Activated B cell treated with CpG ODN at 0.5 μM for 24 hours (primary cell): ENCODE measurements at regions of chr4 and their contacts with region 1.

Region 1: GRCh38 chr4:15649914-15650545 is 5.1 kb downstream of the FBXL5 start:
- DNase-seq: no peak
- ATAC-seq: peak; percentile 63
- H3K4me3 Mint-ChIP-seq: no peak overlapping the region
- H3K27ac Mint-ChIP-seq: peak overlapping the region; percentile 31
- H3K4me1 Mint-ChIP-seq: peaks cover 53% of the 10 kb centered on the region
- H3K27me3 Mint-ChIP-seq: no peaks in the 10 kb centered on the region
- CTCF ChIP-seq: no peak

Region 2: DNA sequence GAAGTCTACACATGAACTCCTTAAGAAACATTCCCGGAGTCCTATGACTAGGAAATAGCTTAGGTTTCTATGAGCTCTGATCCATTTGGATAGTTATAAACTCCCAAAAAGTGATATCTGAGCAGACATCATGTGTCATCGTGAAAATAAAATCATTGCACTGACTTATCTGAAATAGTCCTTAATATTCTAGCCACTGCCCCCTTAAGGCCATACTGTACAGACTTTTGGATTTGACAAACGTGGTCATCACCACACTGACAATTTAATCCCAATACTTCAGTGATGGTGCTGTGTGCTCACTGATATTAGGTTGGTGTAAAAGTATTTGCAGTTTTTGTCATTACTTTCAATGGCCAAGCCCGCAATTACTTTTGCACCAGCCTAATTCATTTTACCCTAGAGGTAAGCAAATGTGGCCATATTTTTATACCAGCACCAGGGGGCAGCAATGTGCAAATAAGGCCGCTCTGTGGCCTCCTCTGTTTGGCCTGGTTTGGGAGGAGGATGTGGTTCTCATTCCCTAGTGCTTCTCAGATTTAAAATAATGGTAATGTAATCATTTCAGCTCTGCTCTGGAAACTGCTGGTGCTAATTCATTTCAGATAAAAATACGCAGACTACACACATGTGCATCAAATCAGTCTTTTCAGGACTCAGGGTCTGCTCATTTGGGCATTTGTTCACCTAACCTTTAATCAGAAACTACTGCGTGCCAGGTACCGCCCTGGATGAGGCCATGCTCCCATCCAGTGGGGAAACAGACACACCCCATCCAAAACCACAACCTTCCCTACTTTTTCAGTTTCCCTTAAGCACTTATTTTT is 418.6 kb before region 1 on chr4:
- CTCF ChIA-PET with region 1: interaction called, 4 read pairs
- POLR2A ChIA-PET with region 1: no interaction called
- intact Hi-C with region 1: loop called (anchors 1 kb)
- DNase-seq: peak; percentile 24
- ATAC-seq: peak; percentile 79
- H3K4me3 Mint-ChIP-seq: no peak overlapping the region
- H3K27ac Mint-ChIP-seq: no peak overlapping the region
- H3K4me1 Mint-ChIP-seq: peaks cover 21% of the 10 kb centered on the region
- H3K27me3 Mint-ChIP-seq: peaks cover 2% of the 10 kb centered on the region
- CTCF ChIP-seq: peak; percentile 70

Region 3: DNA sequence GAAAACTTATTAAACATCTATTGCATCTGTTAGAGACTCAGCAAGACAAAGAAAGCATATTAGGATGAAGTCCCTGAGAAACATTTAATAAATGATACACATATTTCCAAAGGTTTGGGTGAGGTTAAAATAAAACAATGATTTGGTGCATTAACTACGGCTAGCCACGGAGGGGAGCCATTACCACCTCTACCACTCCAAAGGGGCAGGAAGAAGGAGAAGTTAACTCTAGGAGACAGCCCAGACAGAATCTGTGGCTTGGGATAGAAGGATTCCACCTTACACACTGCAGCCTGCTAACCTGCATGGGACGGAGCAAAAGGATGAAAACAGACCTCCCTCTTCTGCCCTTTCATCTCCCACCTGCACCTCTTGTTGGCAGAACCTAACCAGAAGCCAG is 411.3 kb before region 1 on chr4:
- CTCF ChIA-PET with region 1: interaction called, 3 read pairs
- POLR2A ChIA-PET with region 1: no interaction called
- intact Hi-C with region 1: loop called (anchors 2 kb)
- DNase-seq: no peak
- ATAC-seq: peak; percentile 58
- H3K4me3 Mint-ChIP-seq: no peak overlapping the region
- H3K27ac Mint-ChIP-seq: no peak overlapping the region
- H3K4me1 Mint-ChIP-seq: peaks cover 8% of the 10 kb centered on the region
- H3K27me3 Mint-ChIP-seq: peaks cover 2% of the 10 kb centered on the region
- CTCF ChIP-seq: no peak

Region 4: GRCh38 chr4:15410750-15411149 is 239.3 kb before region 1 on chr4:
- CTCF ChIA-PET with region 1: no interaction called
- POLR2A ChIA-PET with region 1: no interaction called
- intact Hi-C with region 1: loop called (anchors 5 kb)
- DNase-seq: no peak
- ATAC-seq: peak; percentile 68
- H3K4me3 Mint-ChIP-seq: peak overlapping the region; percentile 73
- H3K27ac Mint-ChIP-seq: peak overlapping the region; percentile 79
- H3K4me1 Mint-ChIP-seq: peaks cover 67% of the 10 kb centered on the region
- H3K27me3 Mint-ChIP-seq: no peaks in the 10 kb centered on the region
- CTCF ChIP-seq: no peak

Region 5: DNA sequence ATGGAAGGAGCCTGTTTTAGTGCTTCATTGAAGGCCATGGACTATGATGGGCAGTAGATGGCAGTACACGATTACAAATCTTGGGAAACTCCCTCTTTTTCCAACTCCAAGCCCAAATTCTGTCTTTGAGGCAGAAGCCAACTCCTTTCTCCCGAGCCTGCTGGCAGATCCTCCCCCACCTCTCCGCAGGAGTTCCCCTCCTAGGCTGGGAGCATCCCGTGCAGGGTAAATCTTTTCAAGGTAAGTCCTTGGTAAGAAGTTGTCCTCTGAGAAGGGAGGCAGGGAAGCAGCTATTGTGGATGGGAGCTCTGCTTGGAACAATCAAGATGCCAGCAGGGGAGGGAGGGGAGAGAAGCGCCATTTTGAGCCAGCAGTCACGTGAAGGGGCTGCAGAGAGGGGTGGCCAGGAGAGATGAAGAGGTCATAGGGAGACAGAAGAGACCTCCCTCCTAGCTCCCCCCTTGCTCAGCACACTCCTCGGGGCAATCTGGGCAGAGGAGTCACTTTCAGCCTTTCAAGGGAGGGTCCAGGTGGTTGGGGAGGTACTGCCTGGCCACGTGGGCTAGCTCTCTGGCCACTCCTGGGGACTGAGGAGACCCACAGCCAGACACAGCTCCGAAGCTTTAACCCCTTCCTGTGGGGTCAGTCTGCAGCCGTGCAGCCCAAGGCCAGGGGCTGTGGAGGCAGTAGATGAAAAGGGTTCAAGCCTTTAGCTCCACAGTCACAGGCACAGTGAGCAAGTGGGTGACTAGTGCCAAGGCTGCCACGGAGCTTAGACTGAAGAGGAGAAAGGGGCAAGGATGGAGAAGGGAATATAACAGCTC is 170.7 kb before region 1 on chr4:
- CTCF ChIA-PET with region 1: no interaction called
- POLR2A ChIA-PET with region 1: no interaction called
- intact Hi-C with region 1: loop called (anchors 1 kb)
- DNase-seq: no peak
- ATAC-seq: no peak
- H3K4me3 Mint-ChIP-seq: no peak overlapping the region
- H3K27ac Mint-ChIP-seq: no peak overlapping the region
- H3K4me1 Mint-ChIP-seq: no peaks in the 10 kb centered on the region
- H3K27me3 Mint-ChIP-seq: no peaks in the 10 kb centered on the region
- CTCF ChIP-seq: no peak

Region 6: GRCh38 chr4:15765910-15766697 is 116.1 kb after region 1 on chr4:
- CTCF ChIA-PET with region 1: no interaction called
- POLR2A ChIA-PET with region 1: no interaction called
- intact Hi-C with region 1: no loop called
- DNase-seq: no peak
- ATAC-seq: no peak
- H3K4me3 Mint-ChIP-seq: no peak overlapping the region
- H3K27ac Mint-ChIP-seq: no peak overlapping the region
- H3K4me1 Mint-ChIP-seq: peaks cover 17% of the 10 kb centered on the region
- H3K27me3 Mint-ChIP-seq: no peaks in the 10 kb centered on the region
- CTCF ChIP-seq: no peak

Region 7: DNA sequence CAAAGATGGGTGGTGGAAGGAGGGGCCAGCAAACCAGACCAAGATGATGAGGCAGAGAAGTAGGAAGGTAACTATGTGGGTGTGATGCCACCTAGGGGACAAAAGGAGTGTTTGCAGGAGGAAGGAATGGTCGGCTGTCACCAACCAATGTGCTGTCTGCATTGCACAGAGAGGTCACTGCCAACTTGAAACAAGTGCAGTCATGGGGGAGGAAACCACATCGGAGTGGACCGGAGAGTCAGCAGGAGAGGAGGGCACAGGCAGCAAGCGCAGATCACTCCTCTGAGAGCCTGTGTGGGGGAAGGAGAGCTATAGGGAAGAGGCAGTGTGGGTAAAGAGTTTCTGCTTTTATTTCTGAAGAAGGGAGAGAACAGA is 351.4 kb after region 1 on chr4:
- CTCF ChIA-PET with region 1: no interaction called
- POLR2A ChIA-PET with region 1: no interaction called
- intact Hi-C with region 1: loop called (anchors 5 kb)
- DNase-seq: peak; percentile 24
- ATAC-seq: peak; percentile 88
- H3K4me3 Mint-ChIP-seq: no peak overlapping the region
- H3K27ac Mint-ChIP-seq: no peak overlapping the region
- H3K4me1 Mint-ChIP-seq: no peaks in the 10 kb centered on the region
- H3K27me3 Mint-ChIP-seq: no peaks in the 10 kb centered on the region
- CTCF ChIP-seq: no peak